ENCODE measurements at regions of chr3 and their contacts with region 1.

Region 1: GRCh38 chr3:149393345-149394160 is 16.1 kb upstream of the TM4SF1 start:
- DNase-seq: peak; percentile 84
- ATAC-seq: peak; percentile 90 to 93
- H3K4me3 ChIP-seq: no peak overlapping the region
- H3K27ac ChIP-seq: no peak overlapping the region
- H3K4me1 ChIP-seq: peaks cover 26% of the 10 kb centered on the region
- H3K27me3 ChIP-seq: no peaks in the 10 kb centered on the region
- CTCF ChIP-seq: peak; percentile 86

Region 2: GRCh38 chr3:148971401-148972163 is 422.0 kb before region 1 on chr3:
- intact Hi-C with region 1: no loop called
- DNase-seq: no peak
- ATAC-seq: no peak
- H3K4me3 ChIP-seq: no peak overlapping the region
- H3K27ac ChIP-seq: no peak overlapping the region
- H3K4me1 ChIP-seq: no peaks in the 10 kb centered on the region
- H3K27me3 ChIP-seq: no peaks in the 10 kb centered on the region
- CTCF ChIP-seq: no peak

Region 3: DNA sequence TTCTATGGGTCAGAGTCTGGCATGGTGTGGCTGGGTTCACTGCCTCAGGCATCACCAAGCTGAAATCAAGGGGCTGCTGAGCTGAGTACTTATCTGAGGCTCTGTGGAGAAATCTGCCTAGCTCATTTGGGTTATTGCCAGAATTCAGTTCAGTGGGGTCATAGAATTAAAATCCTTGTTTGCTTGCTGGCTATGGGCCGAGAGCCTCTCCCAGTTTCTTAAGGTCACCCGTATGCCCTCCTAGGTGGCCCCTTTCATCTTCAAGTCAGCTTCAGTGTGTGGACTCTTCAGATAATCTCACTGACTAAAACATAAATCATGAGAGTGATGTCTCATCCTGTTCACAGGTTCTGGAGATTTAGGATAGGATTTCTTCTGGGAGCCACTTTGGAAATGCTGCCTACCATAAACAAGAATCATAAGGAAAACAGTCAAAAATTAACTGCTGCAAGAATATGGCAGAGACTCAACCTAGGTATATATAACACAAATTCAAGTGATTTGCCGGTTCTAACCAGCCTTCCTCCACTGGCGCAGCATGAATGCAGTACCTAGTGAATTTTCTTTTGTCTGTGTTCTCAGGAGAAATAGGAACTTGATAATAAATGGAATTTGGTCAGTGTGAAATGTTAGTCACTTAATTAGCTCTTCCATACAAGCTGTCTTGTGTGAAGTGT is 177.2 kb before region 1 on chr3:
- intact Hi-C with region 1: no loop called
- DNase-seq: peak; percentile 38
- ATAC-seq: peak; percentile 43 to 48
- H3K4me3 ChIP-seq: no peak overlapping the region
- H3K27ac ChIP-seq: no peak overlapping the region
- H3K4me1 ChIP-seq: peaks cover 21% of the 10 kb centered on the region
- H3K27me3 ChIP-seq: no peaks in the 10 kb centered on the region
- CTCF ChIP-seq: no peak

Region 4: GRCh38 chr3:149267565-149267964 is 126.0 kb before region 1 on chr3:
- intact Hi-C with region 1: no loop called
- DNase-seq: no peak
- ATAC-seq: no peak
- H3K4me3 ChIP-seq: no peak overlapping the region
- H3K27ac ChIP-seq: no peak overlapping the region
- H3K4me1 ChIP-seq: no peaks in the 10 kb centered on the region
- H3K27me3 ChIP-seq: no peaks in the 10 kb centered on the region
- CTCF ChIP-seq: no peak

Region 5: GRCh38 chr3:149473357-149474249 is 80.0 kb after region 1 on chr3:
- intact Hi-C with region 1: loop called (anchors 10 kb)
- DNase-seq: peak; percentile 66
- ATAC-seq: peak; percentile 93 to 96
- H3K4me3 ChIP-seq: no peak overlapping the region
- H3K27ac ChIP-seq: peak overlapping the region; percentile 71
- H3K4me1 ChIP-seq: peaks cover 29% of the 10 kb centered on the region
- H3K27me3 ChIP-seq: no peaks in the 10 kb centered on the region
- CTCF ChIP-seq: no peak